B cell (primary cell): ENCODE measurements at regions of chr3 and their contacts with region 1.

Region 1: DNA sequence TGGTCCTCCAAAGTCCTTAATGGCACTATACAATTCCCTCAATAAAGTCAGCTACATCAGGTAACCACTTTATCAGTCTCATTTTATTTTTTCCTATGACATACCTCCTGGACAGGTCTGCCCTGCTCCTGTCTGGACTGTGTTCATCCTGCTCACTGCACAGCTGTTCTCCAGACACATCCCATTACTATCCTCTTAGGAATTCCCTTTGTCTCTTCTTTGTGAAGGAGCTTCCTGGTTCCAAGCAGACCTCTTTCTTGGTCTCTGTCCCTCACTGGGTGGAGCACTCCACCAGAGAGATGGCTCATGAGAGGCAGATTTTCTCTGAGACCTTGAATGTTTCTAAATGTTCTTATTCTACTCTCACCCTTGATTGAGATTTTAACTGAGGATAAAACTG is 60.1 kb downstream of the KY start:
- DNase-seq: no peak
- ATAC-seq: no peak
- H3K4me3 ChIP-seq: no peak overlapping the region
- H3K4me3 Mint-ChIP-seq: no peak overlapping the region
- H3K27ac ChIP-seq: no peak overlapping the region
- H3K27ac Mint-ChIP-seq: no peak overlapping the region
- H3K4me1 ChIP-seq: no peaks in the 10 kb centered on the region
- H3K4me1 Mint-ChIP-seq: no peaks in the 10 kb centered on the region
- H3K27me3 ChIP-seq: no peaks in the 10 kb centered on the region
- H3K27me3 Mint-ChIP-seq: peaks cover 5% of the 10 kb centered on the region
- CTCF ChIP-seq: no peak

Region 2: DNA sequence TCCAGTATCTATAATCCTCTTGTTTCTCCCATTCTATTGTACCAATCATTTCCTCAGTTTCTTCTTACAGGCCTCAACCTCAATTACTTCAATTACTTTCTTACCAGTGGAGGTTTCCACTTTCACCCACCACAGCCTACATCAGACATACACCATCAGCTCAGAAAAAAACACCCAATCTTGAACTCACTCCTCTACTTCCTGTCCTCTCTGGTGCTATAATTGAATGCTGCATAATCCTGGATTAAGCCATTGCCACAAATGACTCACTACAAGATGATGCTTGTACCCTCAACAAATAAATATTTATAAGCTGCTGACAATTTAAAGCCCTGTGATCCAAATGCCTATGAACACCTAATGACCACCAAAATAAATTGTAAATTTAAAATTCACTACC is 358.6 kb before region 1 on chr3:
- CTCF ChIA-PET with region 1: no interaction called
- POLR2A ChIA-PET with region 1: no interaction called
- intact Hi-C with region 1: no loop called
- DNase-seq: no peak
- ATAC-seq: no peak
- H3K4me3 ChIP-seq: no peak overlapping the region
- H3K4me3 Mint-ChIP-seq: peak overlapping the region; percentile 4
- H3K27ac ChIP-seq: no peak overlapping the region
- H3K27ac Mint-ChIP-seq: no peak overlapping the region
- H3K4me1 ChIP-seq: peaks cover 16 to 33% of the 10 kb centered on the region in 2 donors
- H3K4me1 Mint-ChIP-seq: peaks cover 62% of the 10 kb centered on the region
- H3K27me3 ChIP-seq: no peaks in the 10 kb centered on the region
- H3K27me3 Mint-ChIP-seq: no peaks in the 10 kb centered on the region
- CTCF ChIP-seq: no peak

Region 3: DNA sequence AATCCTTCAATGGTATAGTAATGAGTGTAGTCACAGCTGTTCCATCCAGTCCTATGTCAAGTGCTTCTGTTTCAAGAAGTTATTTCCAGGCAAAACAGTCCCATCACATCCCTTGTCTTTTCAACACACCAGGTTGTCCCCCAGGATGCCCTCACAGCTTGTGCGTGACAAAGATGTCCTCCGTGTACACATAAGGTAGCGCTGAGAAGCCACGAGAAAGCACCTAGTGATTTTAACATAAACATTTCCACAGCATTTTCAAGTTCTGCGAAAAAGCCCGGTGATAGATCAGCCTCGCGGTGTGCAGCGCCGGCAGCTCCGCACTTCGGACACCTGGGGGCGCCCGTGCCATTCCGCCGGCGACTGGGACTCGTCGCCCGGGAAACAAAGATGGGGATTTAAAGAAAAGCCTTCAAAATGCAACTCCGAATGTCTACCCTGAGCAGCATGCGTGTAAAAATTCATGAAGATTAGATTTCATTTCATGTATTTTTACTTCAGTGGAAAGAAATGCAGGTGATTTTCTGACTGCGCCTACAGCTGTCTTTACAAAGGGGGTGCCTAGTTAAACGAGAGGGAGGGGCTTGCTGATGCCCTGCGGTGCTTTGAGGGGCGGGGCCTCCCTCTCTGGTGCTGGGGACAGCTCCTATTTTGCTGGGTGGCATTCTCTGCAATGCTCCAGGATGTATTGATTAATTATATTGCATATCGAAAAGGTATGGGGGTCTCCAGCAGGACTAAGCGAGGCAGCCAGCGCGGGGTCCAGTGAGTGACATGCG is 10.1 kb after region 1 on chr3:
- CTCF ChIA-PET with region 1: interaction called, 11 read pairs
- POLR2A ChIA-PET with region 1: no interaction called
- intact Hi-C with region 1: no loop called
- DNase-seq: peak; percentile 44
- ATAC-seq: peak; percentile 57
- H3K4me3 ChIP-seq: peak overlapping the region in 2 of 5 experiments; percentile 3 to 33
- H3K4me3 Mint-ChIP-seq: no peak overlapping the region
- H3K27ac ChIP-seq: no peak overlapping the region
- H3K27ac Mint-ChIP-seq: no peak overlapping the region
- H3K4me1 ChIP-seq: peaks cover 6 to 9% of the 10 kb centered on the region in 2 donors
- H3K4me1 Mint-ChIP-seq: peaks cover 8% of the 10 kb centered on the region
- H3K27me3 ChIP-seq: peaks cover 0 to 4% (median 2%) of the 10 kb centered on the region in 4 experiments
- H3K27me3 Mint-ChIP-seq: peaks cover 7% of the 10 kb centered on the region
- CTCF ChIP-seq: peak; percentile 83